Dorsolateral prefrontal cortex (tissue), 120 donors: ENCODE measurements at regions of chr9 and their contacts with region 1.

Region 1: GRCh38 chr9:126844085-126844484 is 16.4 kb upstream of the ZBTB34 start:
- DNase-seq: no peak
- H3K4me3 ChIP-seq: peak overlapping the region in 33 of 59 donors; percentile 3 to 49 (median 18)
- H3K27ac ChIP-seq: peak overlapping the region in 58 of 59 donors; percentile 17 to 95 (median 84)
- H3K27me3 ChIP-seq: no peaks in the 10 kb centered on the region
- CTCF ChIP-seq: no peak

Region 2: DNA sequence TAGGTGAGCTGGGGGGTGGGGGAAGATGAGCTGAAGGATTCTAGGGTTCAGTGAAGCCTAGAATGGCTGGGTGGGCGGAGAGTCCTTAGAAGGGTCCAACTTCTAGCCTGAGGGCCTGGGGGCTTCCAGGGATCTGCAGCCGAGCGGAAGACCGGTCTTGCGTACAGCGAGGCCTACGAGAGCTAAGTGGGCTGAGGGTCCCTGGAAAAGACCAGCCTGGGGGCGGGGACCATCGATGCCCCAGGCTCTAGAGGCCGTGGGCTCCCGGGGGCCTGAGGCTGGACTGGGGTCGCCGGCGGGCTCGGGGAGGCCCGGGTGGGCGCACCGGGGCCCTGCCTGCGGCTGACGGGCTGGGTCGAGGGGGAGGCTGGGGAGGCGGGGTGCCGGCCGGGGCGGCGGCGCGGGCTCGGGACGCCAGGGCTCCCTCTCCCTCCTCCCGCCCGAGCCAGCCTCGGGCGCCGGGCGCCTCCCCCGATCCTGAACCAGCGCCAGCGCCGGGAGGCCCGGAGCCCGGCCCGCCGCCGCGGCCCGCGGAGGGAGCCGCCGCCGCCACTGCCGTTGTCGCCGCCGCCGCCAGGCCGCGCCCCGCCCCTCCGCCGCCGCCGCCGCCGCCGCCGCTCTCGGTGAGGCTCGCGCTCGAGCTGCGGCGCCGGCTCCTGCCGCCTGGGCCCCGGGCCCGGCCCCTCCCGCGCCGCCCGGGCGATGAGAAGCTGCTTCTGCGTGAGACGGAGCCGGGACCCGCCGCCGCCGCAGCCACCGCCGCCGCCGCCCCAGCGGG is 517.7 kb before region 1 on chr9 and contains the start of gene MVB12B:
- intact Hi-C with region 1: no loop called
- DNase-seq: peak in 2 of 10 donors; percentile 39 to 70
- H3K4me3 ChIP-seq: peak within 1 kb of the TSS; percentile 39 to 87 (median 77)
- H3K27ac ChIP-seq: peak within 1 kb of the TSS; percentile 76 to 99 (median 96)
- H3K27me3 ChIP-seq: no peaks in the 10 kb centered on the region
- CTCF ChIP-seq: no peak
- total RNA-seq, gene MVB12B: 43.4 to 233 (median 75.7) TPM

Region 3: DNA sequence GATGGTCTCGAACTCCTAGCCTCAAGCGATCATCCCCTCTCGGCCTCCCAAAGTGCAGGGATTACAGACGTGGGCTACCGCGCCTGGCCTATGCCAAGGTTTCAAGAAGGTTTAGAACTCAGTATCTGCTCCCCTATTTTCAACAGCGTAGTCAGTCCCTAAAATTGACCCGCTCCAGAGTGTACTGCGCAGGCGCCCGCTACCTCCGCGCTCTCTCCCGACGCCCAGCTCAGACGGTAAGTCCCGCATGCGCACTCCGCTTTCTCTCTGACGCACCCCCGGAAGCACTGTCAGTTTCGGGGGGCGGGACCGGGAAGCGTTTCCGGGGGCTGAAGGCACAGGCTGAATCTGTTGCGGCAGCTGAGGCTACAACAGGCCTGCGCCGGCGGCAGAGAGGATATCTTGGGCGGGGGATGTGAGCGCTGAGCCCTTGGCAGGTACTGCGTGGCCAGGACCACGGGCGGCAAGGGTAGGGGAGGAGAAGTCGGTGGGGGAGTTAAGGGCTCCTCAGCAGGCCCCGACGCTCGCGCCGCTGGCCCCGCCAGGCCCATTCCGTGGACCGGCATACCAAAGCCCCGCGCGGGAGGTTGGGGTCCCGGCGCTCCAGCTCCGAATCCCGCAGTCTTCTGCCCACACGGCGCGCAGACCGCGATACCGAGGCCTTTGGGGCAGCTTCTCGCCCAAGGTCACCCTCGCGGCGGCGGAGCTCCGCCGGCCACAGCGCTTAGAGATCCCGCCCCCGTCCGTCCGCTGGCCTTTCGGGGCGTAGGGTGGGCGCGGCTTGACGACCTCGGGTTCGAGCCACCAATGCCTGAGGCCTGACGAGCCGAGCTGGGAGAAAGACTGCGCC is 39.2 kb before region 1 on chr9 and contains the start of gene ZBTB43:
- intact Hi-C with region 1: loop called in 1 of 2 experiments (anchors 5 kb)
- DNase-seq: peak; percentile 87 to 96 (median 94)
- H3K4me3 ChIP-seq: peak within 1 kb of the TSS; percentile 63 to 100 (median 96)
- H3K27ac ChIP-seq: peak within 1 kb of the TSS in 57 of 59 donors; percentile 24 to 93 (median 81)
- H3K27me3 ChIP-seq: no peaks in the 10 kb centered on the region
- CTCF ChIP-seq: peak in 38 of 56 donors; percentile 5 to 56 (median 26)
- total RNA-seq, gene ZBTB43: 18.2 to 56.1 (median 32.5) TPM